ENCODE measurements at regions of chr9 and their contacts with region 1.

Region 1: DNA sequence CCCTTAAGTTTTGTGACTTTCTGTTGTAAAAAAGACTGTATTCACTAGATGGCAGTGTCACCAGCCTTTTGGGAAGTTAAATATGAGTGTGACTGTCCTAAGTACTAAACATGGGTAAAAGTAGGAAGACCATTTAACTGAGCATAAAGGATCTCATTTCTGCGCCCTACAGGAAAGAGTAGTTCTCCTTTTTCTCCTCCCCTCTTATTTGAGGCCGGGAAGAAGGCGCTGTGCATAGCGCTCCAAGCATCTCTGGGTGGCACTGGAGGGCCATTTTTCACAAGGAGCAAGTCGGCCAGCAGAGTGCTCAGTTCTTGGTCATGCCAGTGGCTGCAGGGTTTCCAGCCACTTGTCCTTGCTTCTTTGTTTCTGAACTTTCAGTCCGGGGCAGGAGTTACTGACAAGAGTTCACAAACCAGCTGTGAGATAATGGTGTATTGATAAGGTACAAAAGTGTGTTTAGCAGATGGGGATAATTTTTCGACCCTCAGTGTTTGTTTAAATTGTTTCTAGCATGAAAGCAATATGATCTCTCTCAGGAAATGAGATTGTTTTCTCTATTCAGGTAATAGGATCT is 227.6 kb upstream of the DMRT1 start:
- DNase-seq: peak; percentile 92
- H3K4me3 ChIP-seq: peak overlapping the region; percentile 33; the same call in 1 of the 2 replicates
- H3K27ac ChIP-seq: no peak overlapping the region
- H3K4me1 ChIP-seq: peaks cover 5% of the 10 kb centered on the region
- H3K27me3 ChIP-seq: no peaks in the 10 kb centered on the region; the same call in 1 of the 2 replicates

Region 2: DNA sequence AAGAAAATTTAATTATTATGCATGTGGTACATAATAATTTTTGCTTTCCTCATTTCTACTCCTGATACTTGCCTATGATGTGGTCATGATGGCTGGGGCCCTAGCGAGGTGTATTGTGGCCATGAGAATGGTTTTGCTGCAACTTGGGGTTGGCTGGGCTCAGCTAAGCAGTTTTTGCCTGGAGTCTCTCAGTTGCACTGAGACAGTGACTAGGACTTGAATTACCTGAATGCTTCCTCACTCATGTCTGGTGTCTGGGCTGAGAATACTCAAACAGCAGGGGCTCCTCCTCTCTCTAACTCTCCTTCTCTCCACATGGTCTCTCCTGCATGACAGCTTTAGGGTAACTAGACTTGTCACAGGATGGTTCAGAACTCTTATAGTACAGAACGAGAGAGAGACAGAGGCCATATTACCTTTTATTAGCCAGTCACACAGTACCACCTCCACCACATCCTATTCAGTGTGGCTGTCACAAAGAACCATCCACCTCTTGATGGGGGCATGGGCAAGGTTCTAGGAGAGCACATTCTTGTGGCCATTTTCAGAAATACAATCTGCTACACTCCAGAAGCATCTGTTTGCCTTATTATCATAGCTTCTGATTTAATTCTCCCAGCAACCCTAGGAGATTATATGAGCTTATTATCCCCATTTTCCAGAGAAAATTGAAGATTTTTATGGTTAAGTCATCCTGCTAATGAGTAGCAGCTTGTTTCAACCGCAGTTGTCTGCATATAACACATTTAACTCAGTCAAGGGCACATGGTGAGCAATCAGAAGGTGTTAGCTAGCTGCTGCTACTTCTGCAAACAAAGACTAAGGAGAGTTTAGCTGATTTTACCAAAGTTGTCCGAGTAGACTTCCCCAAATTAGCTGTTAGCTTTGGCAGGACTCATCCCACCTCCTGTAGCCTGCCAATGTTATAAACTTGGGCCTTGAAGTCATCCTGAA is 154.1 kb before region 1 on chr9:
- in situ Hi-C with region 1: no loop called
- DNase-seq: no peak
- H3K4me3 ChIP-seq: no peak overlapping the region
- H3K27ac ChIP-seq: no peak overlapping the region
- H3K4me1 ChIP-seq: no peaks in the 10 kb centered on the region
- H3K27me3 ChIP-seq: peaks cover 3% of the 10 kb centered on the region; the same call in 1 of the 2 replicates

Region 3: DNA sequence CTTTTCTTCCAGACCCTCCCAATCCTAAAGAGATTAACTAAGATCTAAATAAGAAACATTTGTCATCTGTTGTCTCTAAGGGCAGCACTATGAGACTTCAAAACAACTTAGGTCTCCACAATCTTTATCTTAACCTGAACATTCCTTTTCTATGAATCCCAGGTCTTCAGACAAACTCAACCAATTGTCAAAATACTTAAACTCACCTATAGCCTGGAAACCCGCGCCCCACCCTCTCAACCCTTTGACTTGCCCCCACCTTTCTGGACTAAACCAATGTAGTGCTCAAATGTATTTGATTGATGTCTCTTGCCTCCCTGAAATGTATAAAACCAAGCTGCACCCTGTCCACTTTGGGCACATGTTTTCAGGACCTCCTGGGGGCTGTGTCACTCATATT is 151.1 kb after region 1 on chr9:
- in situ Hi-C with region 1: loop called (anchors 5 kb)
- DNase-seq: no peak
- H3K4me3 ChIP-seq: no peak overlapping the region
- H3K27ac ChIP-seq: no peak overlapping the region
- H3K4me1 ChIP-seq: no peaks in the 10 kb centered on the region
- H3K27me3 ChIP-seq: 0 out of 2 replicates have a peak, but pooled peaks cover 14% of the 10 kb centered on the region

Region 4: DNA sequence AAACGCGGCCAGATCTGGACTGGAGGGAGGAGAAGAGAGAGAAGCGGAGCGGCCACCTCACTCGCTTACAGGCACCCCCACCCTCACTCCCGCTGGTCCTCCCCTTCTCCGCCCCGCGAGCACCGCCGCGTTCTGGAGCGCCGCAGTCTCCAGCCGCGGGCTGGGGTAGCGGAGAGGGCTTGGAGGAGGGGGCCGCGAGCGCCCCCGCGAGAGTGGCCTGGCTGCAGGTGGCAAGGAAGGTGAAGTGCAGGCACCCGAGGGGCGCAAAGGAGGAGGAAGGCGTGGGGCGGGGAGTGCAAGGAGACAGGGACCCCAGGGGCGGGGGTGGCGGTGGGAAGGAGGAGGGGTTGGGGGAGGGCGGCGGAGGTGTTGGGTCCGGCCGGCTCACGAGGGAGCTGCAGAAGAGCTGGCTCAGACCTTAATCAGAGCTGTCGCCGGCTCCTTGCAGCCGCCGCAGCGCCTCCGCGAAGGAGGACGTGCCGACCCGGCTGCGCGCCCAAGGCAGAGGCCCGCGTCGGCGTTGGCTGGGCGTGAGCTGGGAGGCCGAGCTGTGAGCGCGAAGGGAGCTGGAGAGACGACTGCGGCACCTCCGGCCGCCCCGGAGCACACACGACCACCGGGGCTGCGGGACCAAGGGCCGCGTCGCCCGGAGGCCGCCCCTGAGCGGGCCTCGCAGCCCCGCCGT is 362.5 kb after region 1 on chr9 and contains the start of gene DMRT3:
- in situ Hi-C with region 1: loop called (anchors 25 kb)
- DNase-seq: peak; percentile 23
- H3K4me3 ChIP-seq: no peak within 1 kb of the TSS
- H3K27ac ChIP-seq: no peak within 1 kb of the TSS
- H3K4me1 ChIP-seq: no peaks in the 10 kb centered on the region
- H3K27me3 ChIP-seq: peaks cover 85% of the 10 kb centered on the region
- total RNA-seq, gene DMRT3: not detected in 2 replicates

Region 5: GRCh38 chr9:1248743-1249142 is 634.9 kb after region 1 on chr9:
- in situ Hi-C with region 1: no loop called
- DNase-seq: no peak
- H3K4me3 ChIP-seq: no peak overlapping the region
- H3K27ac ChIP-seq: no peak overlapping the region
- H3K4me1 ChIP-seq: no peaks in the 10 kb centered on the region
- H3K27me3 ChIP-seq: peaks cover 7% of the 10 kb centered on the region; the same call in 1 of the 2 replicates

Measured in GM23248 (cell line).